Activated CD4-positive, alpha-beta memory T cell treated with anti-CD3 and anti-CD28 coated beads for 36 hours (primary cell): ENCODE measurements at regions of chr17 and their contacts with region 1.

Region 1: DNA sequence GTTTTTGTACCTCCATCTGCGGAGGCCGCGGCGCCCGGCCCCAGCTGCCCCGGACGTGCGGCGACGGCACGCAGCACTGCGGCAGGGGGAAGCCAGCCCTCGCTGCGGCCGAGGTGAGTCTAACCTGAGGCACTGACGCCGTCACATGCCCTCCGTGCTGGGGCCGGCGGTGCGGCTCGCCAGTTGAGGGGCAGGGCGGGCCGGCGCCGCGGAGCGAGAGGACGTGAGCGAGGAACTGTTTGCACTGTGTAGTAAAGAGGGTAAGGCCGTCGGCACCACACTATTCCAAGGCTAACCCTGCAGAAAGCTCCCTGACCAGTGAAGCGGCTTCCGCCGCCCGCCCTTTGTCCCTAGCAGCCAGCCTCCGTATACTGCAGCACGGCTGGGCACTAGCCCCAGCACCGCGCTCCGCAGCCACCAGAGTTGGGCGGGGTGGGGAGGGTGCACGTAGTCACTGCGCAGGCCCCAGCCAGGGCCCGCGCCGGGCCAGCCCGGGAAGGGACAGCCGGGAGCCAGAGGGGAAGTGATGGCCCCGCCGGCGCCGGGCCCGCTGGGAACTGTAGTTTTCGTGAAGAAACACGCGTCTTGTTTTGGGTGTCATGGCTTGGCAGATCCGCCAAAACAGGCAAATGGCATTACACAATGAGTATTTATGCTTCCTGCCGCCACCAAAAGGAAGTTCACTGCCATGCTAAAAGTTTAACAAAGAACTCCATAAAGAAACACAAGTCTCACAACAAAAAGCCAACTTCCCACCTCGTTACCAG is 580 bp upstream of the KANSL1 start:
- DNase-seq: peak; percentile 96
- H3K4me3 Mint-ChIP-seq: peak overlapping the region; percentile 83
- H3K27ac Mint-ChIP-seq: peak overlapping the region; percentile 89
- H3K4me1 Mint-ChIP-seq: peaks cover 56% of the 10 kb centered on the region
- H3K27me3 Mint-ChIP-seq: no peaks in the 10 kb centered on the region

Region 2: DNA sequence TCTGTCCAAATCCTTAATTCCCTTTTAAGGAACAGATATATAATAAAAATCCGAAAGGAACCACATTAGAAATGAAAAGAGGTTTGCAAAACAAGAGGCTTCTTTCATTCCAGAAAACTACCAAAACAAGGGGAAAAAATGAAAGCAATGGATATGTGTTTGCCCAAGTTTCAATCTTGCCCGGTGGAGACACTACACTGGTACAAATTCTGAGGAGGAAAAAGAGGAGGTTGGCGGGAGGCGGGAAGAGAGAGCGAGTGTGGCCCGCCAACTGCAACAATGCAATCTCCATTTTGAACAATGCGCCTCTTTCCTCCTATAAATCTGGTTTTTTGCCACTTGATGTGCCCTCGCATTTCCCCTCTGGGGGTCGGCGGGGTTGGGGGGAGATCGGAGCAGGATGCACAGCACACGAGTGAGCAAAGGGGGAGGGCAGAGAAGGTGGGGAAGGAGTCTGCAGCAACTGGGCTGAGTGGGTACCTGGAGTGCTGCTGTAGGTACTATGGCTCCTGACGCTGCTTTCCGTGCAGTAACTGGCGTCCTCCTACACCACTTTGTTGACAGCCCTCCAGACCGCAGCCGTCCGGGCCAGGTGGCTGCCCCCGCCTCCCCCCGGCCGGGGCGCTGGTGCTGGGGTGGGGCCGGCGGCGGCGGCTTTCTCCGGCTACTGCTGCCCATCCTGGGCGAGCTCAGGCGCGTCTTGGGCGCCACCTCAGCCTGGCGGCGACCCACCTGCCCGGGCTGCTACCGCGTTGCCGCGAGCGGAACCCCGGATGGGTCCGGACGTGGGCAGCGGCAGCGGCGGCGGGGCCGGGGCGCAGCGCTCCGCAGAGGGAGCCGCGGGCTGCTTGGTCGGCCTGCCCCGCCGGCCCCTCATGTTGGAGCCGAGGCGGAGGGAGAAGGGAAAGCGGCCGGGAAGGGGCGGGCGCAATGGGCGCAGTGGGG is 609.4 kb before region 1 on chr17:
- CTCF ChIA-PET with region 1: no interaction called
- POLR2A ChIA-PET with region 1: no interaction called
- intact Hi-C with region 1: loop called (anchors 1 kb)
- DNase-seq: peak; percentile 71
- H3K4me3 Mint-ChIP-seq: peak overlapping the region; percentile 99
- H3K27ac Mint-ChIP-seq: peak overlapping the region; percentile 91
- H3K4me1 Mint-ChIP-seq: peaks cover 38% of the 10 kb centered on the region
- H3K27me3 Mint-ChIP-seq: peaks cover 6% of the 10 kb centered on the region

Region 3: DNA sequence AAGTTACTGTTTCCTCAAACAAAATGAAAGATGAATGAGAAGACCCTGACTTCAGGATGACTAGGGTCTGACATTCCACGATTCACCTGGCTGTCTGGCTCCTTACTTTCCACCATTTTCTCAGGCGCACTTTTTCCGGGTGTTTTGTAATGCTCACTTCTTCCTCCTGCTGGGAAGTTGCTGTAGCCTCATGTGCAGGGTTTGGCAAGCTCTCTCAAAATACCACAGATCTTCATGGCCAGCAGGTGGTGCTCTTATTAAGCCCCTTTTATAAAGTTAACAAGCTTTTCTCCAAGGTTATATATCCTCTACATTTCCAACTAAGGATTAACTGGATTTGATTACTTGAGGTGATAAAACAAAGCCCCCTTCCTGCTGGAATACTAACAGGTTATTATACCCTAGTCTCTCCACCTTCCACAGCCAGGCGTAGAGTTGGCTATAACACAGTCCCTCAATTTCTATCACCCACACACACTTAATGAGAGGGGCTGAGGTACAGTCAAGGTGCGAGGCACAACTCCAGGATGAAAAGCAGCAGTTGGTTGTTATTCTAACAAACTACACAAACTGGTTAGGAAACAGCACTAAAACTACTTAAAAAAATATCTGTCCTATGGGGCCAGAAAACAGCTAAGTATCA is 149.4 kb before region 1 on chr17:
- CTCF ChIA-PET with region 1: interaction called, 23 read pairs
- POLR2A ChIA-PET with region 1: no interaction called
- intact Hi-C with region 1: no loop called
- DNase-seq: peak; percentile 62
- H3K4me3 Mint-ChIP-seq: no peak overlapping the region
- H3K27ac Mint-ChIP-seq: no peak overlapping the region
- H3K4me1 Mint-ChIP-seq: peaks cover 18% of the 10 kb centered on the region
- H3K27me3 Mint-ChIP-seq: no peaks in the 10 kb centered on the region

Region 4: DNA sequence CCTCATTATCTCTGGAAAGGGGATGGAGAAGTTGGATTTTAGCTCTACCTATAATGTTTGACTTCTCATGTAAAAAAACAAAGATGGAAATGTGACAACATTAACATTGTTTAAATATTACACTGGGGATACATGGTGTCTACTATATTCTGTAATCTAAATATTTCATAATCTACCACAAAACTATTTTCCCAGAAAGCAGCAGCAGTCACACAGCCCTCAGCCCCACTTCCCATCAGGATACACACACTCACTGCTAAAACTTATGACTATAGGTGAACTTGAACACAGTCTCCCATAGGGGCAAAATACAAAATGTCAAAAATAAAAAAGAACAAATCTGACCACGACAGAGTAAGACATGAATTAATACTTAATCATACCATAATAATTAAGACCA is 96.3 kb before region 1 on chr17:
- CTCF ChIA-PET with region 1: interaction called, 6 read pairs
- POLR2A ChIA-PET with region 1: no interaction called
- intact Hi-C with region 1: loop called (anchors 2 kb)
- DNase-seq: no peak
- H3K4me3 Mint-ChIP-seq: no peak overlapping the region
- H3K27ac Mint-ChIP-seq: no peak overlapping the region
- H3K4me1 Mint-ChIP-seq: peaks cover 63% of the 10 kb centered on the region
- H3K27me3 Mint-ChIP-seq: no peaks in the 10 kb centered on the region

Region 5: DNA sequence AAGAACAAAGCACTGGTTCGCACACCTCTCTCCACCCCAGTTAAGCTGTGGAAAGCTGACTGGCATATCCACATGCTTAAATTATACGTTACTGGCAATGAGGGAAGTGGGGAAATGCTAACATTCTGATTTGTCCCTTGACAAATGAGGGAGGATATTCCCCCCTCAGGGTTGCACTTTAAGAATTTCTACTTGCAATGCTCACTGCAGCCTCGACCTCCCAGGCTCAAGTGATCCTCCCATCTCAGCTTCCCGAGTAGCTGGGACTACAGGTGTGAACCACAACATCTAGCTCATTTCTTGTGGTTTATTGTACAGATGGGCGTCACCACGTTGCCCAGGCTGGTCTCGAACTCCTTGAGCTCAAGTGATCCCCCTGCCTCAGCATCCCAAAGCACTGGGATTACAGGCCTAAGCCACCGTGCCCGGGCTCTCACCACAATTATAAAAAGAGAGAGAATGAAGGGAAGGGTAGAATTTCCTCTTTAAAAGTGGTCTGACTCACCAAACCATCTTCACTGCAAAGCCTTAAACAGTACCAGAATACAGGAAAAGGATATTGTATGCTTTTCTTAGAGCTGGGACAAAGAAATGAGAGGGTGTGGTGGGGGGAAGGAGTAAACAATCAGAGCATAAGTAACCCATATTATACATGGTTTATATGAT is 39.5 kb before region 1 on chr17:
- CTCF ChIA-PET with region 1: interaction called, 50 read pairs
- POLR2A ChIA-PET with region 1: interaction called, 4 read pairs
- intact Hi-C with region 1: loop called (anchors 1 kb)
- DNase-seq: peak; percentile 65
- H3K4me3 Mint-ChIP-seq: no peak overlapping the region
- H3K27ac Mint-ChIP-seq: peak overlapping the region; percentile 71
- H3K4me1 Mint-ChIP-seq: peaks cover 84% of the 10 kb centered on the region
- H3K27me3 Mint-ChIP-seq: no peaks in the 10 kb centered on the region

Region 6: GRCh38 chr17:46179375-46179999 is 14.3 kb before region 1 on chr17:
- CTCF ChIA-PET with region 1: interaction called, 26 read pairs
- POLR2A ChIA-PET with region 1: interaction called, 4 read pairs
- intact Hi-C with region 1: loop called (anchors 1 kb)
- DNase-seq: no peak
- H3K4me3 Mint-ChIP-seq: peak overlapping the region; percentile 17
- H3K27ac Mint-ChIP-seq: peak overlapping the region; percentile 30
- H3K4me1 Mint-ChIP-seq: peaks cover 78% of the 10 kb centered on the region
- H3K27me3 Mint-ChIP-seq: no peaks in the 10 kb centered on the region

Region 7: GRCh38 chr17:46266656-46267544 is 73.1 kb after region 1 on chr17:
- CTCF ChIA-PET with region 1: interaction called, 3 read pairs
- POLR2A ChIA-PET with region 1: interaction called, 8 read pairs
- intact Hi-C with region 1: loop called (anchors 2 kb)
- DNase-seq: peak; percentile 72
- H3K4me3 Mint-ChIP-seq: peak overlapping the region; percentile 79
- H3K27ac Mint-ChIP-seq: peak overlapping the region; percentile 25
- H3K4me1 Mint-ChIP-seq: peaks cover 29% of the 10 kb centered on the region
- H3K27me3 Mint-ChIP-seq: peaks cover 15% of the 10 kb centered on the region